ENCODE measurements at regions of chr12 and their contacts with region 1.

Region 1: GRCh38 chr12:104286538-104287482 is 16.7 kb upstream of the EID3 start:
- DNase-seq: peak; percentile 72 to 90 (median 87)
- ATAC-seq: peak; percentile 93
- H3K4me3 ChIP-seq: peak overlapping the region; percentile 73
- H3K4me3 Mint-ChIP-seq: peak overlapping the region; percentile 86 to 100 (median 98)
- H3K27ac ChIP-seq: peak overlapping the region; percentile 66
- H3K27ac Mint-ChIP-seq: peak overlapping the region; percentile 85 to 99 (median 94)
- H3K4me1 ChIP-seq: peaks cover 18 to 19% of the 10 kb centered on the region in 2 donors
- H3K4me1 Mint-ChIP-seq: peaks cover 14 to 40% (median 34%) of the 10 kb centered on the region in 7 donors
- H3K27me3 ChIP-seq: no peaks in the 10 kb centered on the region
- H3K27me3 Mint-ChIP-seq: peaks cover 0 to 1% (median 0%) of the 10 kb centered on the region in 5 donors

Region 2: GRCh38 chr12:103930034-103930786 is 356.6 kb before region 1 on chr12 and contains the start of gene HSP90B1:
- CTCF ChIA-PET with region 1: no interaction called
- POLR2A ChIA-PET with region 1: interaction called, 4 read pairs
- intact Hi-C with region 1: loop called (anchors 1 to 2 kb)
- DNase-seq: peak; percentile 95 to 100 (median 99)
- ATAC-seq: peak; percentile 84
- H3K4me3 ChIP-seq: peak within 1 kb of the TSS; percentile 76
- H3K4me3 Mint-ChIP-seq: peak within 1 kb of the TSS; percentile 84 to 99 (median 92)
- H3K27ac ChIP-seq: peak within 1 kb of the TSS; percentile 100
- H3K27ac Mint-ChIP-seq: peak within 1 kb of the TSS; percentile 97 to 100 (median 100)
- H3K4me1 ChIP-seq: peaks cover 36 to 45% of the 10 kb centered on the region in 2 donors
- H3K4me1 Mint-ChIP-seq: peaks cover 42 to 67% (median 53%) of the 10 kb centered on the region in 7 donors
- H3K27me3 ChIP-seq: no peaks in the 10 kb centered on the region
- H3K27me3 Mint-ChIP-seq: peaks cover 0 to 4% (median 0%) of the 10 kb centered on the region in 5 donors
- total RNA-seq, gene HSP90B1: 226 to 461 (median 436) TPM

Region 3: GRCh38 chr12:104064031-104064822 is 222.6 kb before region 1 on chr12 and contains the start of gene HCFC2:
- CTCF ChIA-PET with region 1: no interaction called
- POLR2A ChIA-PET with region 1: no interaction called
- intact Hi-C with region 1: loop called (anchors 2 to 5 kb)
- DNase-seq: peak; percentile 77 to 93 (median 83)
- ATAC-seq: peak; percentile 99
- H3K4me3 ChIP-seq: peak within 1 kb of the TSS; percentile 95
- H3K4me3 Mint-ChIP-seq: peak within 1 kb of the TSS; percentile 88 to 97 (median 94)
- H3K27ac ChIP-seq: peak within 1 kb of the TSS; percentile 79
- H3K27ac Mint-ChIP-seq: peak within 1 kb of the TSS; percentile 71 to 96 (median 90)
- H3K4me1 ChIP-seq: peaks cover 5 to 9% of the 10 kb centered on the region in 2 donors
- H3K4me1 Mint-ChIP-seq: peaks cover 13 to 31% (median 21%) of the 10 kb centered on the region in 7 donors
- H3K27me3 ChIP-seq: no peaks in the 10 kb centered on the region
- H3K27me3 Mint-ChIP-seq: peaks cover 5 to 27% (median 13%) of the 10 kb centered on the region in 5 donors
- total RNA-seq, gene HCFC2: 11.4 to 20.2 (median 16.2) TPM

Region 4: DNA sequence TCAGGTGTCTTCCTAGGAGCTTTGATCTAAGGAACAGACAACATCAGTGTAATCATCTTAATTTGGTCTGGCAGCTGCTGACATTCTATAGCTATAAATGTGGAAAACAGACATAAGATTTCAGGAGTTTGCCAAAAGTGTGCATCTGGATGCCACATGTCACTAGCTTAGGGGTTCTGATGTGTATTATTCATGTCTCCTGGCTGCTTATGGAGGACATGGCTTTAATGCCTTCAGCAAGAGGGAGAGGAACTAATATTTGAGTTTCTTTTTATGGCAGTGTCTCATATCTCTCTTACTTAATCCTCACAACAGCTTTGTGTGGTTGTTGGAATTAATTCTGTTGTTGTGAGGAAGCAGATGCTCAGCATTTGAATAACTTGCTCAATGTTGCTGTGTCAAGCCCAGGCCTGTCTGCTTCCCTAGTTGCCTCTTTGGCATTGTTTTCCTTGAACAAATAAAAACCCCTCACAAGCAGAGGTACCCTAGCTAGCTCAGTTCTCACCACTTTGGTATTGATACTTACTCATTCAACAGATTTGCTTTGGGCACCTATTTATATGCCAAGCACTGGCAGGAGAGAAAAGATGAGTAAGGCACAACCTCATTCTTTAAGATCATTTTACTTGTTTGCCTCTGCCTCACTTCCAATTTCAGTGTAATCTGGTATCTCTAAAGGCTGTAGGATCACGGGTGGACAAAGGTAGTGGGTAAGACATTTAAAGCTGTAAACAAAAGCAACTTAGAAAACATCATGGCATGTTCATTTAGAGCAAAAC is 23.0 kb before region 1 on chr12:
- CTCF ChIA-PET with region 1: no interaction called
- POLR2A ChIA-PET with region 1: no interaction called
- intact Hi-C with region 1: no loop called
- DNase-seq: no peak
- ATAC-seq: no peak
- H3K4me3 ChIP-seq: no peak overlapping the region
- H3K4me3 Mint-ChIP-seq: no peak overlapping the region
- H3K27ac ChIP-seq: no peak overlapping the region
- H3K27ac Mint-ChIP-seq: no peak overlapping the region
- H3K4me1 ChIP-seq: no peaks in the 10 kb centered on the region
- H3K4me1 Mint-ChIP-seq: no peaks in the 10 kb centered on the region
- H3K27me3 ChIP-seq: no peaks in the 10 kb centered on the region
- H3K27me3 Mint-ChIP-seq: no peaks in the 10 kb centered on the region

Region 5: DNA sequence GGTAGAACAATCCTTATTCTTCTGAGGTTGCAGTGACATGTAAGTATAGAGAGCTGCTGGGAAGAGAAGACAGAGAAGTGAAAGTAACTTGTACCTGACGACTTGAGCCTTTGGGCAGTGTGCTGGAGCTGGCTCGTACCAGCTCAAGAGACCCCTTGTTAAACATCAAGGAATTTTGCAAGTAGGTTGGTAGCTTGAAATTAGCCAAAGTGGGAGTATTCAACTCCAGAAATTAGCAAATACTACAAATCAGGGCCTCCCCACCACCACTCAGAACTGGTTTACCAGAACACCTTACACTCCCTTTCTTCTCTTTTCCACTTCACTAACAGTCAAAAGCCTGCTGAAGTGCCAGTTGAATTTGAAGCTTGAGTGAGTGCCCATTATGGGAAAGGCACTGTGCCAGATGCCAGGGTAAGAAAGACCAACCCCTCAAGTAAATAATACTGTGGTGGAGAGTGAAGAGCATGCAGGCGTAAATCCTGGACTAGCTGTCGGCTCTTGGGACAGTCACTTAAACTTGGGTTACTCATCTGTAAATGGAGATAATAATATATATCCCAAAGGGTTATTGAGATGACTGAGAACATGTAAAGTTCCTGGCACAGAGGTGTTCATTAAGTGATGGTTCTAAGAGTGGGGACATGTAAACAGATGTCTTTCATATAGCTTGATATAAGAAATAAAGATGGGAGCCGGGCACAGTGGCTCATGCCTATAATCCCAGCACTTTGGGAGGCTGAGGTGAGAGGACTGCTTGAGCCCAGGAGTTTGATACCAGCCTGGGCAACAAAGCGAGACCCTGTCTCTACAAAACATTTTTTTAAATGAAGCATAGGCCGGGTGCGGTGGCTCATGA is 10.3 kb before region 1 on chr12:
- CTCF ChIA-PET with region 1: interaction called, 3 read pairs
- POLR2A ChIA-PET with region 1: interaction called, 11 read pairs
- intact Hi-C with region 1: no loop called
- DNase-seq: no peak
- ATAC-seq: peak; percentile 49
- H3K4me3 ChIP-seq: no peak overlapping the region
- H3K4me3 Mint-ChIP-seq: peak overlapping the region; percentile 26 to 75 (median 56)
- H3K27ac ChIP-seq: no peak overlapping the region
- H3K27ac Mint-ChIP-seq: peak overlapping the region in 6 of 9 donors; percentile 1 to 88 (median 60)
- H3K4me1 ChIP-seq: no peaks in the 10 kb centered on the region
- H3K4me1 Mint-ChIP-seq: peaks cover 0 to 10% (median 7%) of the 10 kb centered on the region in 7 donors
- H3K27me3 ChIP-seq: no peaks in the 10 kb centered on the region
- H3K27me3 Mint-ChIP-seq: peaks cover 0 to 5% (median 1%) of the 10 kb centered on the region in 5 donors

Region 6: DNA sequence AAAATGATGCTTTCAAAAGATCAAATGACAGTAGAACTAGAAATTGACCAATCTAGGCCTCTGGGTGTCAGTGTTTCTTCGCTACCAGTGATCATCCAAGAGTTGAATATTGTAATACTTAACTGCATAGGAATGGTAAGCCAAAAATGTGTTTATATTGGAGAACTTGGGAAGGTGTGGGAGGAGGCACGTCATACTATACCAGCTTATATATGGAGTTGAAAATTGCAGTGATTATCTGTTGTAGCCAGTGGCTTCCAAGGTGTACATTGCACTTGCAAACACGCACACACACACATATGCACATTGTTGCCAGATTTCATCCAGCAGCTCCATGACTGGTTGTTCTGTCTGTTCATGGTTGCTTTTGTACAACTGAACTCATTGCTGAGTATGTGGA is 52.9 kb after region 1 on chr12:
- CTCF ChIA-PET with region 1: interaction called, 9 read pairs
- POLR2A ChIA-PET with region 1: no interaction called
- intact Hi-C with region 1: loop called in 1 of 2 experiments (anchors 5 kb)
- DNase-seq: no peak
- ATAC-seq: no peak
- H3K4me3 ChIP-seq: no peak overlapping the region
- H3K4me3 Mint-ChIP-seq: no peak overlapping the region
- H3K27ac ChIP-seq: no peak overlapping the region
- H3K27ac Mint-ChIP-seq: no peak overlapping the region
- H3K4me1 ChIP-seq: no peaks in the 10 kb centered on the region
- H3K4me1 Mint-ChIP-seq: peaks cover 0 to 6% (median 0%) of the 10 kb centered on the region in 7 donors
- H3K27me3 ChIP-seq: no peaks in the 10 kb centered on the region
- H3K27me3 Mint-ChIP-seq: no peaks in the 10 kb centered on the region

Region 7: GRCh38 chr12:104371043-104371870 is 84.4 kb after region 1 on chr12:
- CTCF ChIA-PET with region 1: no interaction called
- POLR2A ChIA-PET with region 1: no interaction called
- intact Hi-C with region 1: no loop called
- DNase-seq: no peak
- ATAC-seq: no peak
- H3K4me3 ChIP-seq: no peak overlapping the region
- H3K4me3 Mint-ChIP-seq: no peak overlapping the region
- H3K27ac ChIP-seq: no peak overlapping the region
- H3K27ac Mint-ChIP-seq: no peak overlapping the region
- H3K4me1 ChIP-seq: peaks cover 0 to 11% of the 10 kb centered on the region in 2 donors
- H3K4me1 Mint-ChIP-seq: peaks cover 5 to 13% (median 12%) of the 10 kb centered on the region in 7 donors
- H3K27me3 ChIP-seq: no peaks in the 10 kb centered on the region
- H3K27me3 Mint-ChIP-seq: no peaks in the 10 kb centered on the region

Region 8: GRCh38 chr12:104680066-104680465 is 393.3 kb after region 1 on chr12:
- CTCF ChIA-PET with region 1: no interaction called
- POLR2A ChIA-PET with region 1: no interaction called
- intact Hi-C with region 1: loop called in 1 of 2 experiments (anchors 5 kb)
- DNase-seq: peak in 7 of 9 donors; percentile 15 to 51 (median 30)
- ATAC-seq: peak; percentile 44
- H3K4me3 ChIP-seq: no peak overlapping the region
- H3K4me3 Mint-ChIP-seq: peak overlapping the region in 3 of 10 donors; percentile 16 to 36 (median 26)
- H3K27ac ChIP-seq: no peak overlapping the region
- H3K27ac Mint-ChIP-seq: peak overlapping the region in 3 of 9 donors; percentile 15 to 80 (median 26)
- H3K4me1 ChIP-seq: peaks cover 25 to 46% of the 10 kb centered on the region in 2 donors
- H3K4me1 Mint-ChIP-seq: peaks cover 36 to 80% (median 46%) of the 10 kb centered on the region in 7 donors
- H3K27me3 ChIP-seq: no peaks in the 10 kb centered on the region
- H3K27me3 Mint-ChIP-seq: no peaks in the 10 kb centered on the region

Region 9: GRCh38 chr12:105235732-105236476 is 949.1 kb after region 1 on chr12 and contains the start of gene APPL2:
- CTCF ChIA-PET with region 1: no interaction called
- POLR2A ChIA-PET with region 1: interaction called, 6 read pairs
- intact Hi-C with region 1: loop called in 1 of 2 experiments (anchors 5 kb)
- DNase-seq: peak; percentile 52 to 81 (median 71)
- ATAC-seq: peak; percentile 86
- H3K4me3 ChIP-seq: peak within 1 kb of the TSS; percentile 71
- H3K4me3 Mint-ChIP-seq: peak within 1 kb of the TSS in 9 of 10 donors; percentile 89 to 95 (median 93)
- H3K27ac ChIP-seq: peak within 1 kb of the TSS; percentile 78
- H3K27ac Mint-ChIP-seq: peak within 1 kb of the TSS; percentile 86 to 96 (median 91)
- H3K4me1 ChIP-seq: peaks cover 25 to 39% of the 10 kb centered on the region in 2 donors
- H3K4me1 Mint-ChIP-seq: peaks cover 42 to 54% (median 48%) of the 10 kb centered on the region in 7 donors
- H3K27me3 ChIP-seq: no peaks in the 10 kb centered on the region
- H3K27me3 Mint-ChIP-seq: peaks cover 0 to 3% (median 0%) of the 10 kb centered on the region in 5 donors
- total RNA-seq, gene APPL2: 31.6 to 74.5 (median 58.3) TPM

Measured in naive thymus-derived CD4-positive, alpha-beta T cell (primary cell).